ENCODE measurements at regions of chr15 and their contacts with region 1.

Region 1: GRCh38 chr15:83559310-83559966 is 94.5 kb upstream of the ADAMTSL3 start:
- DNase-seq: peak in 9 of 10 donors; percentile 61 to 86 (median 70)
- H3K4me3 ChIP-seq: peak overlapping the region in 12 of 59 donors; percentile 2 to 33 (median 15)
- H3K27ac ChIP-seq: peak overlapping the region in 52 of 59 donors; percentile 1 to 99 (median 64)
- H3K27me3 ChIP-seq: no peaks in the 10 kb centered on the region
- CTCF ChIP-seq: peak; percentile 73 to 97 (median 91)

Region 2: DNA sequence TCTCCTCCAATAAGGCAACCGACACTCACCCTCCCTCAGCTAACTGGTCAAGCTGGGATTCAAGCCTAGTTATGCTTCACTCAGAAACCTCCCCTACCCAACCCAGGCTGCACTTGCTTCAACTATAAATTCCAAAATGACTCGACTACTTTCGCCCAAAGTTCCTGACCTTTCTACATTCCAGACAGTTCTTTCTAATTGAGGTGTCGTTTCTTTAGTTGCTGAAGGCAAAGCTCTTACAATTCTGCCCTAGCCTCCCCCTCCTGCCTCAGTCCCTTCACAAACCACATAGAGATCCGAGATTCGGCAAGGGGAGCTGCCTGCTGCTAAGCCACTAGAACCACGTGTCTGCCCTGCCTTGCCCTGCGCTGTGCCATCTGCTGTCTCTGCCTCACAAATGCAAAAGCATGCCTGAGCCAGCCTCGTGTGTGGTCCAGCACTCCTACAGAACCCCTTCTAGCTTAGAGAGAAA is 187.0 kb before region 1 on chr15:
- intact Hi-C with region 1: loop called in 1 of 2 experiments (anchors 10 kb)
- DNase-seq: peak in 3 of 10 donors; percentile 16 to 47 (median 36)
- H3K4me3 ChIP-seq: no peak overlapping the region
- H3K27ac ChIP-seq: no peak overlapping the region
- H3K27me3 ChIP-seq: peaks cover 0 to 63% (median 32%) of the 10 kb centered on the region in 45 donors
- CTCF ChIP-seq: peak in 4 of 56 donors; percentile 5 to 18 (median 9)

Region 3: DNA sequence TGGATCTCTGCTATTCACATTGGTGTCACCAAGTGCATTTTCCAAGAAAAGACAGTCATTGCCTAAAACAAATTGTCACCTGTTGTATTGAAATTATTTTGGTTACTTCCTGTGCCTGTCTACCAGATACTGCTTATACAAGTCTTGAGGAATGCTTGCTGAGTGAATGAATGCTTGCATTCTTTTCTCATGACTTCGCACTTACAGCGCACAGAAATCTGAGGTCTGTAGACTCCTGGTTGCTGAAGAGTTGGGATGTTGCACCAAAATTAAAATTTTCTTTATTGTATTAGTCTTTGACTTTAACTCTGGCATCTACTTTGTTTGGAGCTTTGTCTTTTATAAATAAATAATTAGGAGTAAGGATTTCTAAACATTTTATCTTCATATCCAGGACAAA is 83.9 kb before region 1 on chr15:
- intact Hi-C with region 1: no loop called
- DNase-seq: no peak
- H3K4me3 ChIP-seq: no peak overlapping the region
- H3K27ac ChIP-seq: peak overlapping the region in 50 of 59 donors; percentile 5 to 95 (median 78)
- H3K27me3 ChIP-seq: no peaks in the 10 kb centered on the region
- CTCF ChIP-seq: no peak

Region 4: DNA sequence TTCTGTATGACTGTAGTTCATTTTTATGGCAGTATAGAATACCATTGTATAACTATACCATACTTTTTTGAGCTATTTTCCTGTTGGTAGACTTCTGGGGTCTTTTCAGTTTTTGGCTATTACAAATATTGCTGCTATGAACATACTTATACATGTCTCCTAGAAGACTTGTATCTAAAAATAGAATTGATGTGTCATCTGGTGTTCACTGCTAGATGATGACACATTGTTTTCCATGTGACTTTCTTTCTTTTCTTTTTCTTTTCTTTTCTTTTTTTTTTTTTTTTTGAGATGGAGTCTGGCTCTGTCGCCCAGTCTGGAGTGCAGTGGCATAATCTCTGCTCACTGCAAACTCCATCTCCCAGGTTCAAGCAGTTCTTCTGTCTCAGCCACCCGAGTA is 42.5 kb before region 1 on chr15:
- intact Hi-C with region 1: loop called in 1 of 2 experiments (anchors 5 kb)
- DNase-seq: no peak
- H3K4me3 ChIP-seq: no peak overlapping the region
- H3K27ac ChIP-seq: peak overlapping the region in 47 of 59 donors; percentile 0 to 98 (median 67)
- H3K27me3 ChIP-seq: no peaks in the 10 kb centered on the region
- CTCF ChIP-seq: no peak

Region 5: GRCh38 chr15:83657549-83657948 is 98.1 kb after region 1 on chr15:
- intact Hi-C with region 1: no loop called
- DNase-seq: no peak
- H3K4me3 ChIP-seq: no peak overlapping the region
- H3K27ac ChIP-seq: no peak overlapping the region
- H3K27me3 ChIP-seq: peaks cover 0 to 18% (median 4%) of the 10 kb centered on the region in 45 donors
- CTCF ChIP-seq: peak in 8 of 56 donors; percentile 6 to 27 (median 10)